ENCODE measurements at regions of chr11 and their contacts with region 1.

Region 1: GRCh38 chr11:10540923-10541560 is at the start of gene RNF141:
- DNase-seq: peak; percentile 96
- ATAC-seq: peak; percentile 86
- H3K4me3 ChIP-seq: peak within 1 kb of the TSS; percentile 73 to 93 (median 78)
- H3K4me3 Mint-ChIP-seq: peak within 1 kb of the TSS; percentile 95
- H3K27ac ChIP-seq: peak within 1 kb of the TSS; percentile 83 to 92
- H3K27ac Mint-ChIP-seq: peak within 1 kb of the TSS; percentile 98
- H3K4me1 ChIP-seq: peaks cover 59 to 62% of the 10 kb centered on the region in 2 donors
- H3K4me1 Mint-ChIP-seq: peaks cover 79% of the 10 kb centered on the region
- H3K27me3 ChIP-seq: no peaks in the 10 kb centered on the region
- H3K27me3 Mint-ChIP-seq: no peaks in the 10 kb centered on the region
- CTCF ChIP-seq: peak; percentile 91
- total RNA-seq, gene RNF141: 48.2 and 49.1 TPM in 2 replicates

Region 2: DNA sequence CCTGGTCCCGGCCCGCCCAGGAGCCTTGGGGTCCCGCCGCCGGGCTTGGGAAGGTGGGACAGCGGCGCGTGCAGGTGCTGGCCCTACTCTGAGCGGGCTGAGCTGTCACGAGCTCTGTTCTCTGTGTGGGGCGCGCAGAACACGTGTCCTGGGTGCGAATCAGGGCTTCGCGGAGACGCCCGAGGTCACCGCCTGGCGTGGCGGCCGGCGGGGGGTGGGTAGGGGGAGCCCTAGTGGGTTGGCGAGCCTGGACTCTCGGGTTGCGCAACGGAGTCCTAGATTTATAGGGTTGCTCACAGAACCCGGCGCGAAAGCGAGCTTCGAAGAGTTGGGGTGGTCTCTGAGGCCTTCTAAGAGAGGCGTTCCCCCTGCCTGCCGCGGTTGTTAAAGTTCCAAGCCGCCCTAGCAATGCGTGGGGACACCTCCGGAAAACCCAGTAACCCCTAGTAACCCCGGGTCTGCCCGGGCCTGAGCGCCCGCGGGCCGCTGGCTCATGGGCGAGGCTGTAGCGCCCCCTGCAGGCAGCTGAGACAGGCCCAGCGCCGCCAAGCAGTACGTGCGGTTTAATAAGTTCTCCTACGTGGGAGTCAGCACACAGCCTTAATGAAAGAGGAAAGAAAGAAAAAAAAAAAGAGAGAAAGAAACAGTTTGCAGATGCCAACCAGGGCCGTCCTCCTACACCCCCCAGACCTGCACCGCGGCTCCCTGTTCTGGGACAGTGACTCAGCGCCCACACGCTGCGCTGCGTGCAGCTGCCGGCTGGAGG is 233.4 kb before region 1 on chr11:
- CTCF ChIA-PET with region 1: no interaction called
- POLR2A ChIA-PET with region 1: interaction called, 3 read pairs
- intact Hi-C with region 1: loop called (anchors 10 kb)
- DNase-seq: peak; percentile 91
- ATAC-seq: peak; percentile 72
- H3K4me3 ChIP-seq: peak overlapping the region; percentile 26 to 92 (median 55)
- H3K4me3 Mint-ChIP-seq: peak overlapping the region; percentile 98
- H3K27ac ChIP-seq: no peak overlapping the region
- H3K27ac Mint-ChIP-seq: peak overlapping the region; percentile 85
- H3K4me1 ChIP-seq: peaks cover 42 to 55% of the 10 kb centered on the region in 2 donors
- H3K4me1 Mint-ChIP-seq: peaks cover 50% of the 10 kb centered on the region
- H3K27me3 ChIP-seq: peaks cover 0 to 34% (median 12%) of the 10 kb centered on the region in 4 experiments
- H3K27me3 Mint-ChIP-seq: peaks cover 20% of the 10 kb centered on the region
- CTCF ChIP-seq: peak; percentile 98

Region 3: GRCh38 chr11:10398525-10398924 is 142.5 kb before region 1 on chr11:
- CTCF ChIA-PET with region 1: no interaction called
- POLR2A ChIA-PET with region 1: no interaction called
- intact Hi-C with region 1: no loop called
- DNase-seq: no peak
- ATAC-seq: no peak
- H3K4me3 ChIP-seq: no peak overlapping the region
- H3K4me3 Mint-ChIP-seq: no peak overlapping the region
- H3K27ac ChIP-seq: no peak overlapping the region
- H3K27ac Mint-ChIP-seq: no peak overlapping the region
- H3K4me1 ChIP-seq: peaks cover 0 to 5% of the 10 kb centered on the region in 2 donors
- H3K4me1 Mint-ChIP-seq: no peaks in the 10 kb centered on the region
- H3K27me3 ChIP-seq: peaks cover 0 to 4% (median 0%) of the 10 kb centered on the region in 4 experiments
- H3K27me3 Mint-ChIP-seq: peaks cover 15% of the 10 kb centered on the region
- CTCF ChIP-seq: no peak

Region 4: GRCh38 chr11:10455637-10456487 is 85.2 kb before region 1 on chr11:
- CTCF ChIA-PET with region 1: interaction called, 7 read pairs
- POLR2A ChIA-PET with region 1: interaction called, 6 read pairs
- intact Hi-C with region 1: loop called (anchors 2 kb)
- DNase-seq: peak; percentile 85
- ATAC-seq: peak; percentile 72
- H3K4me3 ChIP-seq: peak overlapping the region; percentile 52 to 69 (median 66)
- H3K4me3 Mint-ChIP-seq: peak overlapping the region; percentile 96
- H3K27ac ChIP-seq: peak overlapping the region; percentile 75 to 98
- H3K27ac Mint-ChIP-seq: peak overlapping the region; percentile 98
- H3K4me1 ChIP-seq: peaks cover 69 to 83% of the 10 kb centered on the region in 2 donors
- H3K4me1 Mint-ChIP-seq: peaks cover 81% of the 10 kb centered on the region
- H3K27me3 ChIP-seq: no peaks in the 10 kb centered on the region
- H3K27me3 Mint-ChIP-seq: no peaks in the 10 kb centered on the region
- CTCF ChIP-seq: no peak

Region 5: DNA sequence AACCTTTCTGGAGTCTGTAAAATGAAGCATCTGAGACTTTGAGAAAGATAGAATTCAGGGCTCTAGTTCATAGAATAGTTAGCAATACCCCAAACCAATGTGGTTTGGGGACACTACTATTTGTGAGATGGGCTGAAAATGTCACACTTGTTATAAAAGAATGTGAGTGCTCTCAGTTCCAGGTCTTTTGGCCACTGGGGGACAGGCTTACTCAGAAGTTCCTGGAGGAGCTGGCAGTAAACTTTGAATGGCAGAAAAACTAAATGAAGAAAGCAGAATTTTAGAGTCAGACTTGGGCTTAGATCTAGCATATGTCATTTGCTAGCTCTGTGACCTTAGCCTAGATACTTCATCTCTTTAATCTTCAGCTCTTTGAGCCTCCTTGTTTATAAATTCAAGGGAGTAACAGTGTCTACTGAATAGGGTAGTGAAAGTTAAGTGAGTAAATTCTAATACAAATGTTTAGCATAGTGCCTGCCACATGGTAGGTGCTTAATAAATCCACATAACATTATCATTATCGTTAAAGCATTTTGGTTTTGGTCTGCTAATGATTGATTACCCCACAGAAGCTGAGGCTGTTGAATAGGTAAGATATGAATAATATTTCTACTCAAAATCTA is 23.8 kb after region 1 on chr11:
- CTCF ChIA-PET with region 1: interaction called, 21 read pairs
- POLR2A ChIA-PET with region 1: interaction called, 5 read pairs
- intact Hi-C with region 1: loop called (anchors 2 kb)
- DNase-seq: peak; percentile 55
- ATAC-seq: peak; percentile 43
- H3K4me3 ChIP-seq: no peak overlapping the region
- H3K4me3 Mint-ChIP-seq: no peak overlapping the region
- H3K27ac ChIP-seq: peak overlapping the region in 1 of 2 donors; percentile 14
- H3K27ac Mint-ChIP-seq: peak overlapping the region; percentile 71
- H3K4me1 ChIP-seq: peaks cover 17 to 35% of the 10 kb centered on the region in 2 donors
- H3K4me1 Mint-ChIP-seq: peaks cover 53% of the 10 kb centered on the region
- H3K27me3 ChIP-seq: no peaks in the 10 kb centered on the region
- H3K27me3 Mint-ChIP-seq: no peaks in the 10 kb centered on the region
- CTCF ChIP-seq: peak; percentile 22

Region 6: DNA sequence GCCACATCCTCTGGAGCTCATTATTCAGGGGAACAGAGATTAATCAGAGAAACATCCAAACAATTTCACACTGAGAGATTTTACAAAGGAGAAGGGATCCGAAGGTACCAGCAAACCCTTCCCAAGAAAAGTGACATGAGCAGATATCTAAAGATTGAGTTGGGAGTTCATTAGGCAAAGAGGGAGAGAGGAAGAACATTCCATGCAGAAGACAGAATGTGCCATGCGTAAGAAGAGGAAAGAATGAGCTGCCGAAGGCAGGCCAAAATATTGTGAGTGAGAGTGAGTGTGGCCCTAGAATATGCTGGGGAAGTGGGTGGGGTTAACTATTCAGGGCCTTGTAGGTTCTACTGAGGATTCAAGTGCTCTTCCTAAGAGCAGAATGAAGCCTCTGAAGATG is 77.4 kb after region 1 on chr11:
- CTCF ChIA-PET with region 1: interaction called, 19 read pairs
- POLR2A ChIA-PET with region 1: interaction called, 3 read pairs
- intact Hi-C with region 1: loop called (anchors 5 kb)
- DNase-seq: no peak
- ATAC-seq: no peak
- H3K4me3 ChIP-seq: no peak overlapping the region
- H3K4me3 Mint-ChIP-seq: peak overlapping the region; percentile 19
- H3K27ac ChIP-seq: peak overlapping the region in 1 of 2 donors; percentile 72
- H3K27ac Mint-ChIP-seq: peak overlapping the region; percentile 91
- H3K4me1 ChIP-seq: peaks cover 48 to 57% of the 10 kb centered on the region in 2 donors
- H3K4me1 Mint-ChIP-seq: peaks cover 69% of the 10 kb centered on the region
- H3K27me3 ChIP-seq: no peaks in the 10 kb centered on the region
- H3K27me3 Mint-ChIP-seq: no peaks in the 10 kb centered on the region
- CTCF ChIP-seq: no peak

Region 7: DNA sequence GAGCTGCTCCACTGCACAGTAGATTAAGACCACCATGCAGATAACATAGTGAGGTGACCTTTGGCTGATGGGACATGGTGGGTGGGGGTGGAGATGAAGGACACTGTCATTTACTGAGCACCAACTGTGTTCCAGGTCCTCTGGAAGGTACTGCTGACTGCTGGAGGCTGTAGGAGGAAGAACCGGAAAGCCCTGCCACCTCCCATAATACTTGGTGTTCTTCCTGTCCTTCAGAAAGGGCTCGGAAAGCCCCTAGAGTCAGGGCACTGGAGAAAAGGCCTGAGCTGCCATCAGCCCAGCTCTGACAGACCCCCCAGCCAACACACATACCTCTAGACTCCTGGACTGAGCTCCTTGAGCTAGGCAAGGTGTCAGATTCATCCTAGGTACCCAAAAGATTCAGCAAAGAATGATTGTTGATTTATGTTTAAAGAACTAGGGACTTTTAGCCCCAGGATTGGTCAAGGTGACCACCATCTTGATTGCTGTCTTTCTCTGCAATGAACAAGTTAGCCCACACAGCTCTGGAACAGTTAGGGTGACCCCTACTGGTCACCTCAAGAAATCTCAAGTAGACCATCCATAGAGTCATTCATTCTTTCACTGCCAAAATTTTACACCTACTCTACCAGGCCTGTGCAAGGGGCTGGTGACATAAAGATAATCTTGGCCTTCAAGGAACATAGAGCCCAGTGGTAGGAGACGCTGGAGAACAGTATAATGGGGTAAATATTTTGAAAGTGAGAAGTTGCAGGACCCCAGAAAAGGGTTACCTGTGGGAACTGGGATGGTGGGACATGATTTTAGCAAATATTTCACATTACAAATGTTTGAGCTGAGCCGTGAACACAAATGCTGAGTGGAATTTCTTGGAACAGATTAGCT is 113.1 kb after region 1 on chr11:
- CTCF ChIA-PET with region 1: interaction called, 48 read pairs
- POLR2A ChIA-PET with region 1: no interaction called
- intact Hi-C with region 1: loop called (anchors 1 kb)
- DNase-seq: peak; percentile 79
- ATAC-seq: peak; percentile 69
- H3K4me3 ChIP-seq: peak overlapping the region in 1 of 5 experiments; percentile 1
- H3K4me3 Mint-ChIP-seq: no peak overlapping the region
- H3K27ac ChIP-seq: no peak overlapping the region
- H3K27ac Mint-ChIP-seq: peak overlapping the region; percentile 2
- H3K4me1 ChIP-seq: peaks cover 60 to 66% of the 10 kb centered on the region in 2 donors
- H3K4me1 Mint-ChIP-seq: peaks cover 82% of the 10 kb centered on the region
- H3K27me3 ChIP-seq: no peaks in the 10 kb centered on the region
- H3K27me3 Mint-ChIP-seq: no peaks in the 10 kb centered on the region
- CTCF ChIP-seq: peak; percentile 63

Region 8: DNA sequence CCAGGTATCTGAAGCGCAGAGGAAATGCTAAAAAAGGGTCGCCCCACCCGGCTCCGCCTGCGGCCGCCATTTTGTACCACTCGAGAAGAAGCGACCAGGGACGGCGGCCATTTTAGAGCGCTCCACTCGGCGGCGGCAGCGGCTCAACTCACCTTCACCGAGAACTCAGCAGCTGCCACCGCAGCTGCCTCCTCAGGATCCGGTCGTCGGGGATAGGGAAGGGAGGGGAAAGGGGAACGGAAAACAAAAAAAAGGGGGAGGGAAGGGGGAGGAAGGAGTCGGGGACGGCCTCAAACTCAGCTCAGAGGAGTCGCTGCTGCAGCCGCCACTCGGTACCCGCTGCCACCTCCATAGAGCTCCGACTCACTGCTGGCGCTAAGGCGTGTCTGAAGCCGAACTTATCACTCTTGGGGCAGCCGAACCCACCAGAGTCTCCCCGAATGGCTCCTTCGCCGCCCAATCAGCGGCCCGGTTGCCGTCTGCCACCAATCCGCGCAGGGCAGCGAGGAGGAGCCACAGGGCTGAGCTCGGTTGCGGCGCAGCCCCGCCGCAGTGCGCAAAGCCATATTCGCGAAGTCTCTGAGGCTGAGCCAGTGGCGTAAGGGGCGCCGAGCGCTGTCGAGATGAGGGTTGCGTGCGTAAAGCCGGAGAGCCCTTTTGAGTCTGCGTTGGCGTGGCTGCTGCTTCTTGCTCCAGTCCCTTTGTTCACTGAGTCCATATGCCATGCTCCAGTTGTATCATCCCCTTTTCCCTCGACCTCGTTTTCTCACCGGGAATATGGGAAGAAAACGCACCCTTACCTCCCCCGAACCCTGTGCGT is 267.7 kb after region 1 on chr11 and contains the start of gene EIF4G2:
- CTCF ChIA-PET with region 1: no interaction called
- POLR2A ChIA-PET with region 1: no interaction called
- intact Hi-C with region 1: loop called (anchors 1 kb)
- DNase-seq: peak; percentile 99
- ATAC-seq: peak; percentile 89
- H3K4me3 ChIP-seq: peak within 1 kb of the TSS; percentile 89 to 97 (median 94)
- H3K4me3 Mint-ChIP-seq: peak within 1 kb of the TSS; percentile 99
- H3K27ac ChIP-seq: peak within 1 kb of the TSS; percentile 92 to 96
- H3K27ac Mint-ChIP-seq: peak within 1 kb of the TSS; percentile 99
- H3K4me1 ChIP-seq: peaks cover 24 to 26% of the 10 kb centered on the region in 2 donors
- H3K4me1 Mint-ChIP-seq: peaks cover 39% of the 10 kb centered on the region
- H3K27me3 ChIP-seq: no peaks in the 10 kb centered on the region
- H3K27me3 Mint-ChIP-seq: no peaks in the 10 kb centered on the region
- CTCF ChIP-seq: no peak
- total RNA-seq, gene EIF4G2: 530 and 592 TPM in 2 replicates

Measured in B cell (primary cell).